ENCODE measurements at regions of chr1 and their contacts with region 1.

Region 1: GRCh38 chr1:176559878-176560277 is 96.9 kb downstream of the PAPPA2 start:
- DNase-seq: peak; percentile 81

Region 2: DNA sequence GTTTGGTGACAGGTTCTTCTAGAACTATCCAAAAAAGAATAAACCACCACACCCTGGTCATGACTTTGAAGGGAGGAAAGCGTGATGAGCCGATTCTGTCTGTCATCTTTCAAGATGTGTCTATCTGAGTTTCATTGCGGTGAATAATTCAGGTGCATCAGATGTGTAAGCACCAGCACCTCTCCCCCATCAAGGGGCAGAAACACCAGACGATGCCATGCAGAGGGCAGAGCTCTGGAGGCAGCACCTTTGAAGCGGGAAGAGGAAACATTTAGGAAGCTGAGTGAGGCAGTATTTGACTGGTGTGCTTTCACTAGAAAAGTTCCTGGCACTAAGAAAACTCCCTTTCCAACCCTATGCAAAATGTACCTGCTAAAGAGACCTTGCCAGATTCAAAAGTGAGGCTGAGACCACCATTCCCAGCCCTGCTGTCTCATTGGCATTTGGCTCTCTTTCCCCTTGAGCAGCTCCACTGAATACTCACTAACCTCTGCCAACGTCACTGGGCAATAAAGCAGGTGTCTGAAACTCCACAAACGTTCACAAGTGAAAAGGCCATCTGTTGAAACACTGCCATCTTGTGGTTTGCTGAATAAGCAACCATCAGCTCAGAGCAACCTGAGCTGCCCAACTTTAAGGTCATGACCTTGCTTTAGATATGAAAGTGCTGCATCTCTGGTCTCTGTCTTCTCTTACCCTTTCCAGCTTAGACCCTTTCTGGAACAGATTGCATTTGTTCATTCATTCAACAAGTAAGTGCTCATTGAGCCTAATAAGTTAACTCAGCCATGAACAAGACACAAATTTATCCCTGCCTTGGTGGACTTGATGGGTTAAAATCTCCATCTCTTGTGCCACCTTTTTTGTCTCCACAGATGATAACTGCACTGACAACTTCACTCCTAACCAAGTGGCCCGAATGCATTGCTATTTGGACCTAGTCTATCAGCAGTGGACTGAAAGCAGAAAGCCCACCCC is 131.7 kb after region 1 on chr1:
- intact Hi-C with region 1: loop called (anchors 1 to 5 kb)
- DNase-seq: no peak